K562 (cell line): ENCODE measurements at regions of chrX and their contacts with region 1.

Region 1: GRCh38 chrX:153726286-153727122 is 1.8 kb downstream of the ABCD1 start:
- DNase-seq: peak; percentile 64 to 81 (median 70)
- ATAC-seq: peak; percentile 52
- H3K4me3 ChIP-seq: peak overlapping the region; percentile 12; the same call in 1 of the 2 replicates
- H3K27ac ChIP-seq: peak overlapping the region; percentile 83
- H3K4me1 ChIP-seq: peaks cover 39 to 60% of the 10 kb centered on the region in 2 experiments
- H3K27me3 ChIP-seq: no peaks in the 10 kb centered on the region
- CTCF ChIP-seq: no peak
- EP300 ChIP-seq: no peak; the same call in 1 of the 2 replicates
- POLR2A ChIP-seq: 0 out of 2 replicates have a peak, but pooled peaks have one; percentile 38
- RAD21 ChIP-seq: no peak

Region 2: DNA sequence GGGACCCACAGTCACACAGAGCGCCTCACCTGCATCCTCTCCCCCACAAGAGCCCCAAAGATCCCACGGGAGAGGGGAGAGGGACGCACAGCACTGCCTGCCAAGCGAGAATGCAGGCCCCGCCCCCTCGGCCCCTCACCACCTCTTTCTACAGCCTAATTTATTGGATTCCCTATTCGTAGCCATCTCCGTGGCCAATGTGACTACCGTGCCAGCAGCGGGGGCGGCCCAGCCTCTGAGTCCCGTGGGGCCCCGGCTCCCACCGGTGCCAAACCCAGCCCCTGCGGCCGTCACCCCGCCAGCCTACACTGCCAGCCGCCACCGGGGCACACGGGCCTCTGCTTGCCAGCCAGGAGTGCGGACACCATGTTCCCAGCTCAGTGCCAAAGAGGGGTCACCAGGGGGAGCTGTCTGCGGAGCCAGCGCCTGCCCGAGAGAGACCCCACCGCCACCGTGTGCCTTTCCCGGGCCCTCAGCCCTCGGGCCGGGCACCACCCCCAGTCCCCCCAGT is 17.8 kb after region 1 on chrX:
- CTCF ChIA-PET with region 1: no interaction called
- POLR2A ChIA-PET with region 1: interaction called, 5 read pairs
- in situ Hi-C with region 1: no loop called
- intact Hi-C with region 1: loop called (anchors 1 kb)
- DNase-seq: peak in 1 of 4 experiments; percentile 28
- ATAC-seq: peak; percentile 40; the same call in 1 of the 3 replicates
- H3K4me3 ChIP-seq: peak overlapping the region; percentile 42
- H3K27ac ChIP-seq: peak overlapping the region; percentile 79
- H3K4me1 ChIP-seq: peaks cover 0 to 52% of the 10 kb centered on the region in 2 experiments; a peak in 3 of 5 replicates
- H3K27me3 ChIP-seq: no peaks in the 10 kb centered on the region
- CTCF ChIP-seq: peak; percentile 32 to 53 (median 42); a peak in 5 of 6 replicates
- EP300 ChIP-seq: no peak
- POLR2A ChIP-seq: no peak
- RAD21 ChIP-seq: no peak